ENCODE measurements at regions of chr1 and their contacts with region 1.

Region 1: GRCh38 chr1:181424786-181425403 is 58.4 kb upstream of the CACNA1E start:
- DNase-seq: no peak
- H3K4me3 ChIP-seq: no peak overlapping the region
- H3K27ac ChIP-seq: no peak overlapping the region
- H3K4me1 ChIP-seq: peaks cover 0 to 8% (median 6%) of the 10 kb centered on the region in 4 donors
- H3K27me3 ChIP-seq: peaks cover 0 to 32% (median 0%) of the 10 kb centered on the region in 4 donors
- CTCF ChIP-seq: peak; percentile 97 to 99 (median 98)
- EP300 ChIP-seq: no peak
- POLR2A ChIP-seq: no peak

Region 2: GRCh38 chr1:181189691-181190363 is 235.1 kb before region 1 on chr1:
- intact Hi-C with region 1: loop called (anchors 1 kb)
- DNase-seq: no peak
- H3K4me3 ChIP-seq: peak overlapping the region; percentile 36 to 54 (median 38)
- H3K27ac ChIP-seq: no peak overlapping the region
- H3K4me1 ChIP-seq: peaks cover 8 to 11% (median 9%) of the 10 kb centered on the region in 4 donors
- H3K27me3 ChIP-seq: peaks cover 0 to 28% (median 0%) of the 10 kb centered on the region in 4 donors
- CTCF ChIP-seq: peak in 2 of 3 experiments; percentile 94 to 98
- EP300 ChIP-seq: no peak
- POLR2A ChIP-seq: no peak

Region 3: GRCh38 chr1:181551249-181551648 is 126.4 kb after region 1 on chr1:
- intact Hi-C with region 1: no loop called
- DNase-seq: no peak
- H3K4me3 ChIP-seq: no peak overlapping the region
- H3K27ac ChIP-seq: peak overlapping the region; percentile 59 to 78 (median 73)
- H3K4me1 ChIP-seq: peaks cover 0 to 39% (median 37%) of the 10 kb centered on the region in 4 donors
- H3K27me3 ChIP-seq: no peaks in the 10 kb centered on the region
- CTCF ChIP-seq: no peak
- EP300 ChIP-seq: no peak
- POLR2A ChIP-seq: no peak

Region 4: GRCh38 chr1:181618559-181618958 is 193.7 kb after region 1 on chr1:
- intact Hi-C with region 1: no loop called
- DNase-seq: no peak
- H3K4me3 ChIP-seq: no peak overlapping the region
- H3K27ac ChIP-seq: no peak overlapping the region
- H3K4me1 ChIP-seq: no peaks in the 10 kb centered on the region
- H3K27me3 ChIP-seq: no peaks in the 10 kb centered on the region
- CTCF ChIP-seq: no peak
- EP300 ChIP-seq: no peak
- POLR2A ChIP-seq: no peak

Region 5: GRCh38 chr1:181768211-181768929 is 343.5 kb after region 1 on chr1:
- intact Hi-C with region 1: no loop called
- DNase-seq: no peak
- H3K4me3 ChIP-seq: no peak overlapping the region
- H3K27ac ChIP-seq: no peak overlapping the region
- H3K4me1 ChIP-seq: no peaks in the 10 kb centered on the region
- H3K27me3 ChIP-seq: no peaks in the 10 kb centered on the region
- CTCF ChIP-seq: no peak
- EP300 ChIP-seq: no peak
- POLR2A ChIP-seq: no peak